ENCODE measurements at regions of chr14 and their contacts with region 1.

Region 1: GRCh38 chr14:61475316-61475715 is 153.9 kb downstream of the PRKCH start:
- DNase-seq: no peak
- ATAC-seq: no peak
- H3K4me3 Mint-ChIP-seq: no peak overlapping the region
- H3K27ac Mint-ChIP-seq: peak overlapping the region; percentile 84
- H3K4me1 Mint-ChIP-seq: peaks cover 91% of the 10 kb centered on the region
- H3K27me3 Mint-ChIP-seq: no peaks in the 10 kb centered on the region

Region 2: GRCh38 chr14:60980811-60981632 is 494.3 kb before region 1 on chr14 and contains the starts of genes SLC38A6 and TRMT5:
- CTCF ChIA-PET with region 1: no interaction called
- POLR2A ChIA-PET with region 1: no interaction called
- intact Hi-C with region 1: loop called in 1 of 2 experiments (anchors 1 kb)
- DNase-seq: peak; percentile 94
- ATAC-seq: peak; percentile 89
- H3K4me3 Mint-ChIP-seq: no peak within 1 kb of the TSS
- H3K27ac Mint-ChIP-seq: no peak within 1 kb of the TSS
- H3K4me1 Mint-ChIP-seq: peaks cover 32% of the 10 kb centered on the region
- H3K27me3 Mint-ChIP-seq: no peaks in the 10 kb centered on the region
- total RNA-seq, gene SLC38A6: 4.5 to 5.3 TPM
- total RNA-seq, gene TRMT5: 19.7 to 20.8 TPM

Region 3: DNA sequence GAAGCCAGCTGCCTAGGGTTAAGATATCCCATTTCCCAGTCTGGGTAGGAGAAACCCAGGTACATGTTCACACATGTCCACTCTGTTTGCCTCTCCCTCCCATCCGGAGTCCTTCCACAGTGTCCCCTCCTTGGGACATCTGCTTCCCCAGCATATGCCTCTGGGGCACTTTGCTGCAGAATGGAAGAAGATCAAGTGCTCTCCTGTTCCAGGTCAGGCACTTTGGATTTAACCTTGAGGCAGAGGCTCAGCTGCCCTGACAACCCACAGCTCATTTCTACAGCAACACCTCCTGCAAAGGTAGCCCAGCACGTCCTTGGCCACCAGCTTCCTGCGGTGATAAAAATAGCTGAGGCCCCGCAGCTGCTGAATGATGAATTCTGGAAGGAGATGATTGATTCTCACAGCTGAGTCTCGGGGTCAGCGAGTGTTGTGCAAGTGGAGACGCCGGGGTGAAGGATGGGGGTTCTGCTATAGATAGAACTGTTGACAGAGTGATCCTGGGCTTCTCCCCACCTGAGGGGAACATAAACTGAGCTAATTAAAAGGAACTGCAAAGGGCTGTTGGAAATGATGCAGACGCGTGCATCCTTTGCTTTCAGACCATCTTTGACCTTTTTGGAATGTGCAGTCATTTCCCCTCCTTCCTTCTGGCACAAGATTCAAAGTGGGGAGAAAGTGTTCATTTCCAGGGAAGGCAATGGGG is 349.3 kb before region 1 on chr14:
- CTCF ChIA-PET with region 1: no interaction called
- POLR2A ChIA-PET with region 1: no interaction called
- intact Hi-C with region 1: no loop called
- DNase-seq: no peak
- ATAC-seq: no peak
- H3K4me3 Mint-ChIP-seq: no peak overlapping the region
- H3K27ac Mint-ChIP-seq: no peak overlapping the region
- H3K4me1 Mint-ChIP-seq: no peaks in the 10 kb centered on the region
- H3K27me3 Mint-ChIP-seq: peaks cover 13% of the 10 kb centered on the region

Region 4: GRCh38 chr14:61493239-61493638 is 17.9 kb after region 1 on chr14:
- CTCF ChIA-PET with region 1: interaction called, 49 read pairs
- POLR2A ChIA-PET with region 1: interaction called, 5 read pairs
- intact Hi-C with region 1: loop called in 1 of 2 experiments (anchors 1 kb)
- DNase-seq: no peak
- ATAC-seq: no peak
- H3K4me3 Mint-ChIP-seq: no peak overlapping the region
- H3K27ac Mint-ChIP-seq: no peak overlapping the region
- H3K4me1 Mint-ChIP-seq: peaks cover 57% of the 10 kb centered on the region
- H3K27me3 Mint-ChIP-seq: no peaks in the 10 kb centered on the region

Region 5: DNA sequence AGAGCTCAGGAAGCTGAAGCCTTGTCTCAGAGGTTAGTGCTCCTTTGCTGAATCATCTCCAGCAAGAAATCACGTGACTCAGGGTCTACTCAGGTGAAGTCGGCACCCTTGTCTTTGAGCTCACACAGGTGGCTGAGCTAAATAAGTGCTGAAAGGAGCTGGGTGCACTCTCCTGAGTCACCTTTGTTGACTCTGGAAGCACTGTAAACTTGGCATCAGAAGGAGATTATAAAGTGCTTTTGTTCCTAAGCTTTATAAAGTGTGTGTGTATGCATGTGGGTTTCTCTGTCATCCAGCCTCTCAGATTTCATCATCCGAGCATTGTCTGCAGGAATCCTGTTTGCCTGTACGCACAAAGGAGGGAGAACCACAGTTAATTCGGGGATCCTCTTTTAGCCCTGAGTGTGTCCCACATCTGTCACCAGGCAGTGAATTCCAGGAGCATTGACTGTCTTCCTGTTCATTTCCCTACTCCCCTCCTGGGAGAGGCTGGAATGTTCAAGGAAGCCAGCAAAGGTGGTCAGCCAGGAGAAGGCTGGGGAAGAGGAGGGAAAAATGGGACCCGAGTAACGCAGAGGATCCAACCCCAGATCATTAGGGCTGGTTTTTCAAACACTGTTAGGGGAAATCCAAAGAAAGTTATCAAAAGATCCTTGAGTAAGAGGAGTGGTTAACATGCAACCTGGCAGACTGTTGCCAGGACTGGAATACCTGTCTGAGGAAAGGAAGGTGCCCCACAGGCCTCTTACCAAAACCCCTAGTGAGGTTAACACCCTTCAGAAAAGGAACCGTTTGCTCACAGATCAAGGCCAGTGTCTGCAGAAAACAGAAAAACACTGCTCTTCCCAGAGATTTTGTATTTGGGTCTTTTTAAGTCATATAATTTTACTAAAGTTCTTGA is 62.5 kb after region 1 on chr14:
- CTCF ChIA-PET with region 1: interaction called, 5 read pairs
- POLR2A ChIA-PET with region 1: interaction called, 3 read pairs
- intact Hi-C with region 1: loop called in 1 of 2 experiments (anchors 2 kb)
- DNase-seq: peak; percentile 69
- ATAC-seq: peak; percentile 78
- H3K4me3 Mint-ChIP-seq: peak overlapping the region; percentile 16
- H3K27ac Mint-ChIP-seq: peak overlapping the region; percentile 89
- H3K4me1 Mint-ChIP-seq: peaks cover 68% of the 10 kb centered on the region
- H3K27me3 Mint-ChIP-seq: no peaks in the 10 kb centered on the region

Region 6: DNA sequence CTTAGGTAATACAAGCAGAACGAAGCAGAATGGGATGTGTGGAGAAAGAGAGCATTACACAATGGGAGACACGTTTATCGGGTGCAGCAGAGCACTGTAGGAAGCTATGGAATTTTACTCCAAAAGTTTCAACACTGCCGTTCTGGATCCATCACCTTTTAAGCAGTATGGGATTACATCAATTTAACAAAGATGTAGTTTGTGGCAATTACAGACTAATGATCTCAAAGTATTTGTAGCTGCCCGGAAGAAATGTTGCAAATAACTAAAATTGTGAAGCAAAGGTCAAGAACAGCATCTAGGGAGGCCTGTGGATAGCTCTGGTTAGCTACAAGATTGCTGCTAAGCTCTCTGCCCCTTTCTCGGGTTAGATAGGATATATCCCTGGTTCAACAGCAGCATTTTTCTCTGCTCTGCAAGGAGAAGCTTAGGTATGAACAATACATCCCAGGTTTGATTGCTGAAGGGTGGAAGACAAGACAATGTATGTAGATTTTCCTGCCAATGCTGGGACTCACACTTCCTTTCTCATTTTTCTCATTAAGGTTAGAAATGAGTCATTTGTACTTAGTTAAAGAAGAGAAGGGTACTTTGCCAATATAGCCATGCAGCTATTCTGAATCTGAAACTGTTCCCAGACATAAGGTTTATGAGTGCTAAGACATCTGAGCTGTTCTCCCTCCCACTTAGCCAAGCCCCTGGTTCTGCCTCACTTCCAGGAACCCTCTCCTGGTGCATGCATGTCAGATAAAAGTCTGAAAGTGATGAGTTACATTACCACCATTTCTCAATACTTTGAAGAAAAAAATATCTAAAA is 145.0 kb after region 1 on chr14:
- CTCF ChIA-PET with region 1: interaction called, 7 read pairs
- POLR2A ChIA-PET with region 1: interaction called, 7 read pairs
- intact Hi-C with region 1: loop called in 1 of 2 experiments (anchors 1 kb)
- DNase-seq: peak; percentile 82
- ATAC-seq: peak; percentile 91
- H3K4me3 Mint-ChIP-seq: no peak overlapping the region
- H3K27ac Mint-ChIP-seq: peak overlapping the region; percentile 81
- H3K4me1 Mint-ChIP-seq: peaks cover 79% of the 10 kb centered on the region
- H3K27me3 Mint-ChIP-seq: no peaks in the 10 kb centered on the region

Region 7: GRCh38 chr14:61750708-61751474 is 275.6 kb after region 1 on chr14:
- CTCF ChIA-PET with region 1: interaction called, 18 read pairs
- POLR2A ChIA-PET with region 1: interaction called, 3 read pairs
- intact Hi-C with region 1: loop called in 1 of 2 experiments (anchors 5 kb)
- DNase-seq: peak; percentile 93
- ATAC-seq: peak; percentile 92
- H3K4me3 Mint-ChIP-seq: peak overlapping the region; percentile 97
- H3K27ac Mint-ChIP-seq: peak overlapping the region; percentile 89
- H3K4me1 Mint-ChIP-seq: peaks cover 22% of the 10 kb centered on the region
- H3K27me3 Mint-ChIP-seq: peaks cover 2% of the 10 kb centered on the region

Region 8: GRCh38 chr14:61768240-61768639 is 292.9 kb after region 1 on chr14:
- CTCF ChIA-PET with region 1: no interaction called
- POLR2A ChIA-PET with region 1: no interaction called
- intact Hi-C with region 1: no loop called
- DNase-seq: no peak
- ATAC-seq: no peak
- H3K4me3 Mint-ChIP-seq: no peak overlapping the region
- H3K27ac Mint-ChIP-seq: no peak overlapping the region
- H3K4me1 Mint-ChIP-seq: peaks cover 28% of the 10 kb centered on the region
- H3K27me3 Mint-ChIP-seq: no peaks in the 10 kb centered on the region